ENCODE measurements at regions of chr6 and their contacts with region 1.

Region 1: DNA sequence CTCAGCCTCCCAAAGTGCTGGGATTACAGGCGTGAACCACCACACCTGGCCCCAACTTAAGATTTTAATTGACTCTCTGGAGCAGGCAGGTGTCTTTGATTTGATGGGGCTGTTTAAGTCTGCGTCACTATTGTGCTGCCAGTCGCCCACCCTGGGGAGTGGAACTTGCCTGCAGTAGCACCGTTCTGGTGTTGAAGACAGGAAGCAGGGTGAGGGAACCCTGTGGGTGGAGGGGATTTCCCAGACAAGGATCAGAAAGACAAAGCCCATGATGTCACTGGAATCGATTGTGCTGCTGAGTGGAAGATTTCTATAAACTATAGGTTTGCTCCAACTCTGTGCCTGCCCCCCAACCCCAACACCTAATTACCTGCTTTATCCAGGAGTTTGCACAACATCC is 11.0 kb downstream of the ALDH8A1 start:
- DNase-seq: peak; percentile 93
- ATAC-seq: peak; percentile 99
- H3K4me3 Mint-ChIP-seq: no peak overlapping the region
- H3K27ac Mint-ChIP-seq: peak overlapping the region; percentile 43
- H3K4me1 Mint-ChIP-seq: peaks cover 25% of the 10 kb centered on the region
- H3K27me3 Mint-ChIP-seq: no peaks in the 10 kb centered on the region
- CTCF ChIP-seq: no peak

Region 2: DNA sequence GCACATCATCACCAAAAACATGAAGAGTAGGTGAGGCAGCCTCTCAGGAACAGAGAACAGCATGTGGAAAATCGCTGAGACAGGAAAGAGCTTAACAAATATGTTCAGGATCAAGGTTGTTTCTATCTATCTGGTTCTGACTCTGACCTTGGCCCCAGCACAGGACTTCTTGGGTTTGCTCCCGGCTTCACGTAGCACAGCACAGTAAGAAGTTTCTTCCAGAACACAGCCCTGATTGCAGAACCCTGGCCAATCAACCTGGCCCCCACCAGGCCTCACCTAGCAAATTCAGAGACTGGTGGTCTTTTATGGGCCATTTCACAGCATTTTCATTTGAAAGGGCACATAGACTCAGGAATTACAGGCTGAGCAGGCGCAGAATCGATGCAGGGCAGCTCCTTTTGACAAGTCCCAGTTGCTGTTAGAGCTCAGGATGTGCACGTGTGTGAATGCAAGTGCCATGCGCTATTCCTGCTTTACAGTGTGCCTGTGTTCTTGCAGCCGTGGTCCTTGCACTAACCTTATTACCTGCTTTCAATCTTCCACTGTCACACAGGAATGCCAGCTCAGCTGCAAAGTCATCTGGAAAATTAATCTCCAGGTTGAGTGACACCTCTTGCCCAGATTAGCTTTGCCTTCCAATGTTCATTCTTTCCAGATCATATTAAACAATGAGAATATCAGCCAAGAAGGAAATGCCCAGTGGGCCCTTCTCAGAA is 786.0 kb before region 1 on chr6:
- CTCF ChIA-PET with region 1: interaction called, 34 read pairs
- POLR2A ChIA-PET with region 1: no interaction called
- intact Hi-C with region 1: loop called (anchors 5 kb)
- DNase-seq: no peak
- ATAC-seq: no peak
- H3K4me3 Mint-ChIP-seq: no peak overlapping the region
- H3K27ac Mint-ChIP-seq: no peak overlapping the region
- H3K4me1 Mint-ChIP-seq: no peaks in the 10 kb centered on the region
- H3K27me3 Mint-ChIP-seq: peaks cover 2% of the 10 kb centered on the region
- CTCF ChIP-seq: no peak

Region 3: DNA sequence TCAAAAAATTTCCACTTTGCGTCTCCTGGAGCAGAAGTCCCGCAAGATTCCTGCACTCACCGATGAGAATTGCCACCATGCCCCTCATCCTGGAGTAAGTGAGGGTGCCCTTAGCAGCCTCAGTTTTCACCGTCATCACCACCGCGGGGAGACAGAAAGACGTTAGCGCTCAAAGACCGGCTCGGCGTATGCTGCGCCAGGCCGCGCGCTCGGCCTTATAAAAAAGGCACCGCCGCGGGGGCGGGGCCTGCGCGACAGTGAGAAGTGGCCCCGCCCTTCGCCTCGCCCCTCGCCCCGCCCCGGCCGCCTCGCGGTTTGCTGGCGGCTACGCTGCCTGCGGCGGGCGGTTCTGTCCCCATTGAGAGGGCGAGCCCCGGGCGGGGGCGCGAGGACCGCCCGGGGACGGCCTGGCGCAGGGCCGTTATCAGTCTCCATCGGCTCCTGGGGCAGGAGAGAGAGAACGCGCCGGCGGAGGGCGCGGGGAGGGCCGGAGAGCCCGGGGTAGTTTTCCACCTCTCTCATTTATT is 764.2 kb before region 1 on chr6:
- CTCF ChIA-PET with region 1: interaction called, 6 read pairs
- POLR2A ChIA-PET with region 1: no interaction called
- intact Hi-C with region 1: loop called (anchors 5 kb)
- DNase-seq: peak; percentile 94
- ATAC-seq: peak; percentile 81
- H3K4me3 Mint-ChIP-seq: peak overlapping the region; percentile 98
- H3K27ac Mint-ChIP-seq: peak overlapping the region; percentile 98
- H3K4me1 Mint-ChIP-seq: peaks cover 64% of the 10 kb centered on the region
- H3K27me3 Mint-ChIP-seq: no peaks in the 10 kb centered on the region
- CTCF ChIP-seq: no peak

Region 4: DNA sequence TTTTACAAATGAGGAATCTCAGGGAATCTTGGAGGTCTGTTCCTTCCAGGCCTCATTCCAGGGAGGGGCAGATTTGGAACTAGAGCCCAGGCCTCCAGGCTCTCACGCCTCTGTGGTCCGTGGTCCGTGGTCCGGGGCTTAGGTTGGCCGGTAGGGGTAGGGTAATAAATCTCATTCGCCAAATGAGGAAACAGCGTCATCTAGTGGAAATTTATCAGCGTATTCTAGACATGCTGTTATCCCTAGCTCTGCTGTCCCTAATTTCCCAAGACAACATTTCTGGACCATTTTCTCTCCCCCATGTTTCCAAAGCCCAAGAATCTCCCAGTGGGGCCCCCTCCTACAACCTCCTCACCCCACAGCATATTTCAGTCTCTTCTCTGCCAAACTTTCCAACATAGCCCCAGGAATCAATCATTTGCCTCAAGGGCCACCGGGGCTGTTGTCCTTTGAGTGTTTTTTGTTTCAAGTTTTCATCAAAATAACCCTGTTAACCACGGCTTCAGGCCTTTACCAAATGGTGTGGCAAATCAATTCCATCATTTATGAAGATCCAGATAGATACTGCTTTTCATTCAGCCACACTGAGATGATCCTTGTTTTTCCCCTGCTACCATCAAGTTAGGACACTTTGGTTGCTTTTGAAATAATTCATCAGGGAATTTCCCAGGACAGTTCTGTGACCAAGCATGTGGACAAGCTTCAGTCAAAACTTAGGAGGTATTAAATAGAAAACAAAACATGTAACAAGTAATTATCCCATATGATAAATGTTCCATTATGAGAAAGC is 115.8 kb before region 1 on chr6:
- CTCF ChIA-PET with region 1: interaction called, 20 read pairs
- POLR2A ChIA-PET with region 1: no interaction called
- intact Hi-C with region 1: loop called (anchors 2 kb)
- DNase-seq: peak; percentile 51
- ATAC-seq: peak; percentile 90
- H3K4me3 Mint-ChIP-seq: no peak overlapping the region
- H3K27ac Mint-ChIP-seq: no peak overlapping the region
- H3K4me1 Mint-ChIP-seq: no peaks in the 10 kb centered on the region
- H3K27me3 Mint-ChIP-seq: peaks cover 3% of the 10 kb centered on the region
- CTCF ChIP-seq: peak; percentile 93

Region 5: GRCh38 chr6:134908906-134909516 is 29.9 kb before region 1 on chr6:
- CTCF ChIA-PET with region 1: interaction called, 17 read pairs
- POLR2A ChIA-PET with region 1: no interaction called
- intact Hi-C with region 1: no loop called
- DNase-seq: peak; percentile 43
- ATAC-seq: peak; percentile 68
- H3K4me3 Mint-ChIP-seq: no peak overlapping the region
- H3K27ac Mint-ChIP-seq: no peak overlapping the region
- H3K4me1 Mint-ChIP-seq: no peaks in the 10 kb centered on the region
- H3K27me3 Mint-ChIP-seq: no peaks in the 10 kb centered on the region
- CTCF ChIP-seq: no peak

Region 6: GRCh38 chr6:134925800-134926199 is 13.1 kb before region 1 on chr6:
- CTCF ChIA-PET with region 1: interaction called, 15 read pairs
- POLR2A ChIA-PET with region 1: no interaction called
- intact Hi-C with region 1: no loop called
- DNase-seq: no peak
- ATAC-seq: no peak
- H3K4me3 Mint-ChIP-seq: no peak overlapping the region
- H3K27ac Mint-ChIP-seq: no peak overlapping the region
- H3K4me1 Mint-ChIP-seq: no peaks in the 10 kb centered on the region
- H3K27me3 Mint-ChIP-seq: no peaks in the 10 kb centered on the region
- CTCF ChIP-seq: no peak

Region 7: GRCh38 chr6:134961366-134961765 is 22.5 kb after region 1 on chr6:
- CTCF ChIA-PET with region 1: interaction called, 10 read pairs
- POLR2A ChIA-PET with region 1: no interaction called
- intact Hi-C with region 1: no loop called
- DNase-seq: no peak
- ATAC-seq: no peak
- H3K4me3 Mint-ChIP-seq: no peak overlapping the region
- H3K27ac Mint-ChIP-seq: no peak overlapping the region
- H3K4me1 Mint-ChIP-seq: peaks cover 17% of the 10 kb centered on the region
- H3K27me3 Mint-ChIP-seq: no peaks in the 10 kb centered on the region
- CTCF ChIP-seq: no peak

Region 8: GRCh38 chr6:135075018-135075417 is 136.1 kb after region 1 on chr6:
- CTCF ChIA-PET with region 1: no interaction called
- POLR2A ChIA-PET with region 1: no interaction called
- intact Hi-C with region 1: no loop called
- DNase-seq: no peak
- ATAC-seq: no peak
- H3K4me3 Mint-ChIP-seq: no peak overlapping the region
- H3K27ac Mint-ChIP-seq: no peak overlapping the region
- H3K4me1 Mint-ChIP-seq: peaks cover 21% of the 10 kb centered on the region
- H3K27me3 Mint-ChIP-seq: no peaks in the 10 kb centered on the region
- CTCF ChIP-seq: peak; percentile 36

Measured in activated CD8-positive, alpha-beta T cell treated with anti-CD3 and anti-CD28 coated beads for 36 hours (primary cell).